Mammary epithelial cell (primary cell): ENCODE measurements at regions of chr10 and their contacts with region 1.

Region 1: GRCh38 chr10:99845837-99846382 is 63.5 kb downstream of the ABCC2 start:
- DNase-seq: peak; percentile 86
- H3K4me3 ChIP-seq: no peak overlapping the region
- H3K27ac ChIP-seq: no peak overlapping the region
- H3K4me1 ChIP-seq: no peaks in the 10 kb centered on the region
- H3K27me3 ChIP-seq: no peaks in the 10 kb centered on the region
- CTCF ChIP-seq: peak; percentile 90 to 98

Region 2: DNA sequence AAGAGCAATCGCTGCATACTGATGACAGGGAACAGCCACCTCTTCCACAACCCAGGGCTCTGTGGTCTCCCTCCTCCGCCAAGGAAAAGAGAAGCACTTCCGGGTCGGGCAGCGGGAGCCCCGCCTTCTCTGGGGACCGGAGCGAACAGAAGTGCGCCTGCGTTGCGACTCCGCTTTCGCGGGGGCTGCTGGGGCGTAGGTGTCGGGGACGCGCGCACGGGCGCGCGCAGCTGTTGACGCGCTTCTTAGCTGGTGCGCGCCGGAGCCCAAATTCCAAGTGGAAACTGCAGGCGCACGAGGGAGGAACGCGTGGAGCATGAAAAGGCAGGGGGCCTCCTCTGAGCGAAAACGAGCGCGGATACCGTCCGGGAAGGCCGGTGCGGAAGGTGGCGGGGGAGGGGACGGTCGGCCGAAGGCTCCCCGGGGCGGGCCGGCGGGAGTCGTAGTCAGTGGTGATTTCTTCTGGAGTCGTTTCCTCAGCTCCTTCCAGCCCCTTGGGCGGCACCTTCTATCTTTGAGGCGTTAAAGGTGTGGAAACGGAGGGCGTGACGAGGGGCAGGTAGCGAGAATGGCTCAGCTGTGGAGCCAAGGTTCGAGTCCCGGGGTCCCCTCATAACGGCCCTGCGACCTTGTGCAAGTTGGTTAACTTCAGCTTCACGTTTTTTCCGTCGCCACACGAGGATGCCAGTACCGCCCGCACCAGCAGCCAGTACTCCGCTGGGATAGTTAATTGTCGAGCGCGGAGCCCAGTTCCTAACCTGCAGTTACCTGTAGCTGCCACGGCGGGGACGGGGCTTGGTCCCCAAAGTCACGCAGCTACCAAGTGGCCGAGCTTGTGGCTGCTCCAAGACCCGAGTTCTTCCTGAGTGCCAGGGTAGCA is 113.6 kb before region 1 on chr10 and contains the starts of genes COX15 and CUTC:
- CTCF ChIA-PET with region 1: interaction called, 9 read pairs
- dilution Hi-C with region 1: no loop called
- in situ Hi-C with region 1: no loop called
- intact Hi-C with region 1: loop called (anchors 1 kb)
- DNase-seq: peak; percentile 95
- H3K4me3 ChIP-seq: peak within 1 kb of the TSS; percentile 67 to 78 (median 74)
- H3K27ac ChIP-seq: peak within 1 kb of the TSS; percentile 83
- H3K4me1 ChIP-seq: peaks cover 13% of the 10 kb centered on the region
- H3K27me3 ChIP-seq: no peaks in the 10 kb centered on the region
- CTCF ChIP-seq: peak; percentile 43 to 63
- total RNA-seq, gene COX15: 26.5 to 29.5 TPM
- total RNA-seq, gene CUTC: 8.2 to 14.7 TPM

Region 3: GRCh38 chr10:100046021-100046486 is 200.1 kb after region 1 on chr10:
- CTCF ChIA-PET with region 1: interaction called, 17 read pairs
- dilution Hi-C with region 1: no loop called
- in situ Hi-C with region 1: loop called (anchors 5 to 10 kb)
- intact Hi-C with region 1: loop called (anchors 1 kb)
- DNase-seq: peak; percentile 69
- H3K4me3 ChIP-seq: no peak overlapping the region
- H3K27ac ChIP-seq: no peak overlapping the region
- H3K4me1 ChIP-seq: peaks cover 29% of the 10 kb centered on the region
- H3K27me3 ChIP-seq: no peaks in the 10 kb centered on the region
- CTCF ChIP-seq: peak; percentile 95 to 96

Region 4: GRCh38 chr10:100185364-100186252 is 339.7 kb after region 1 on chr10 and contains the start of gene ERLIN1:
- CTCF ChIA-PET with region 1: no interaction called
- dilution Hi-C with region 1: no loop called
- in situ Hi-C with region 1: no loop called
- intact Hi-C with region 1: loop called (anchors 2 kb)
- DNase-seq: peak; percentile 90
- H3K4me3 ChIP-seq: peak within 1 kb of the TSS; percentile 66 to 96 (median 85)
- H3K27ac ChIP-seq: peak within 1 kb of the TSS; percentile 95
- H3K4me1 ChIP-seq: peaks cover 24% of the 10 kb centered on the region
- H3K27me3 ChIP-seq: no peaks in the 10 kb centered on the region
- CTCF ChIP-seq: no peak
- total RNA-seq, gene ERLIN1: 31.5 to 44.3 TPM

Region 5: DNA sequence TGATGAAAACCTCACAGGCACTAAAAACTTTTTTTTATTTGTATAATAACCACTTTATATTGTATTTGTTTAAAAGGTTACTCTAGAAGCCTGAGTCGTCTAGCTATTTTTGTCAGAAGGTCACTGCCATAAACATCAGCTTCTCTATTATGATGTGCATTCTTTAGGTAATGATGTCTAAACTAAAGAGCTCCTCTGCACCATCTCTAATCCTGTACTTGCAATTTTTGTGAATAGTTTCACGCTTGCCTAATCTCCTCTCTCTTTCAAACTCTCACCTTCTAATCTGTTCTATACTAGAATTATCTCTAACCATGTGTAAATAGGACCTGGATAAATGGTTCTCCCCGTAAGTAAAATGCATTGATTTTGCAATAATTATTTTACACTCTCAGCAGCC is 393.9 kb after region 1 on chr10:
- CTCF ChIA-PET with region 1: no interaction called
- dilution Hi-C with region 1: loop called (anchors 25 kb)
- in situ Hi-C with region 1: no loop called
- intact Hi-C with region 1: loop called (anchors 2 kb)
- DNase-seq: no peak
- H3K4me3 ChIP-seq: no peak overlapping the region
- H3K27ac ChIP-seq: no peak overlapping the region
- H3K4me1 ChIP-seq: no peaks in the 10 kb centered on the region
- H3K27me3 ChIP-seq: no peaks in the 10 kb centered on the region
- CTCF ChIP-seq: no peak